Activated CD8-positive, alpha-beta T cell treated with anti-CD3 and anti-CD28 coated beads for 36 hours (primary cell): ENCODE measurements at regions of chr2 and their contacts with region 1.

Region 1: GRCh38 chr2:174492963-174493431 is 6.2 kb upstream of the GPR155 start:
- DNase-seq: peak; percentile 88
- ATAC-seq: peak; percentile 79
- H3K4me3 Mint-ChIP-seq: peak overlapping the region; percentile 77
- H3K27ac Mint-ChIP-seq: peak overlapping the region; percentile 98
- H3K4me1 Mint-ChIP-seq: peaks cover 73% of the 10 kb centered on the region
- H3K27me3 Mint-ChIP-seq: no peaks in the 10 kb centered on the region
- CTCF ChIP-seq: no peak

Region 2: DNA sequence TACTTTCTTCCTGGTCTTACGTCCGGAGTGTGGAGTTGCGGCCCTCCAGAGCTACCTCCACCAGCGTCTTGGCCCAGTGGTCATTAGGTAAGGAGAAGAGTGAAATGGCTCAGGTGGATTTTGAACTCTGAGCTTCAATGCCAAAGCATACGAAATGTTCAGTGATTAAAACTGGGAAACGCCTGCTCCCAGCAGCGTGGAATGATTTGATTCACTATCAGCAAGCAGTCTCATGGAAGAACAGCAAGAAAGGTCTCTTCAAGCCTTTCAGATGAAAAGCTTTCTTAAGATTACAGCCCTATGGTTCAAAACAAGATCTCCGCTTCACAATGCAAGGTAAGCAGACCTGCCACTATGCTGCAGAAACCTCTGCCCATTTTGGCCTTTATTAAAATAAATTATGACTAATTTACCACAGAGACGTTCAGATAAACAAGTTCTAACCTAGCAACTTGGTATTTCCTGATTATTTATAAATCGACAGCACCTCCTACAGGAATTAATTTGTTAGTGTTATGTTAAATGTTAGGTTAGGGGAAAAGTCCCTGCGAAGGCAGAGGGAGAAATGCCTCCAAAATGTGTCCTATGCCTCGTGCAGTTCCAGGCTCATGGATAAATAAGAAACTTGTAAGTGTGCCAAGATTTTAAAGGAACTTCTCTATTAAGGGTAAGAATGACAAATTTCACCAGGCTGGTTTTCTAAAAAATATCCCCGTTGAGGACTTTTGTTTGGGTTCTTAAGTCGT is 148.1 kb before region 1 on chr2:
- CTCF ChIA-PET with region 1: no interaction called
- POLR2A ChIA-PET with region 1: no interaction called
- intact Hi-C with region 1: no loop called
- DNase-seq: no peak
- ATAC-seq: no peak
- H3K4me3 Mint-ChIP-seq: no peak overlapping the region
- H3K27ac Mint-ChIP-seq: no peak overlapping the region
- H3K4me1 Mint-ChIP-seq: peaks cover 24% of the 10 kb centered on the region
- H3K27me3 Mint-ChIP-seq: peaks cover 43% of the 10 kb centered on the region
- CTCF ChIP-seq: peak; percentile 54

Region 3: DNA sequence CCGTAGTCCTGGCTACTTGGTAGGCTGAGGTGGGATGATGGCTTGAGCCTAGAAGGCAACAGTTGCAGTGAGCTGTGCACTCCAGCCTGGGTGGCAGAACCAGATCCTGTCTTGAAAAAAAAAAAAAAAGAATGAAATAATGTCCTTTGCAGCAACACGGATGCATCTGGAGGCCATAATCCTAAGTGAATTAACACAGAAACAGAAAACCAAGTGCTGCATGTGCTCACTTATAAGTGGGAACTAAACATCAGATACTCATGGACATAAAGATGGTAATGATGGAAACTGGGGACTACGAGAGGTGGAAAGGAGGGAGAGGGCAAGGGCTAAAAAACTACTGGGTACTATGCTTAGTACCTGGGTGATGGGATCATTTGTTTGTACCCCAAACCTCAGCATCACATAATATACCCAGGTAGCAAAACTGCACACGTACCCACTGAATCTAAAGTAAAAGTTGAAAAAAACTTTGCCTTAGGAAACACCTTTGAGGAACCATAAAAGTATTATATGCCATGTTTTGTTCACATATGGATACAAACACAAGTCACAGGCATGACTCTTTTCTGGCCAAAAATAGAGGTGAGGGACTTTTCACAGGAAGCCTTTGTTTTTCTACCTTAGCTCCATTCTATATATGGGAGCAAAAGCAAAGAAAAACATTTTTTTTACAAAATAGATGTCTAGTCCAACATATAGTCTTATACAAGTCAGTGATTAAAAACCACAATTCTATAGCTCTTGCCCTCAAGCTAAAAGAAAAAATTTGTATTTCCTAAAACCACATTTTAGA is 42.8 kb before region 1 on chr2:
- CTCF ChIA-PET with region 1: no interaction called
- POLR2A ChIA-PET with region 1: no interaction called
- intact Hi-C with region 1: no loop called
- DNase-seq: no peak
- ATAC-seq: no peak
- H3K4me3 Mint-ChIP-seq: no peak overlapping the region
- H3K27ac Mint-ChIP-seq: no peak overlapping the region
- H3K4me1 Mint-ChIP-seq: peaks cover 7% of the 10 kb centered on the region
- H3K27me3 Mint-ChIP-seq: no peaks in the 10 kb centered on the region
- CTCF ChIP-seq: no peak

Region 4: DNA sequence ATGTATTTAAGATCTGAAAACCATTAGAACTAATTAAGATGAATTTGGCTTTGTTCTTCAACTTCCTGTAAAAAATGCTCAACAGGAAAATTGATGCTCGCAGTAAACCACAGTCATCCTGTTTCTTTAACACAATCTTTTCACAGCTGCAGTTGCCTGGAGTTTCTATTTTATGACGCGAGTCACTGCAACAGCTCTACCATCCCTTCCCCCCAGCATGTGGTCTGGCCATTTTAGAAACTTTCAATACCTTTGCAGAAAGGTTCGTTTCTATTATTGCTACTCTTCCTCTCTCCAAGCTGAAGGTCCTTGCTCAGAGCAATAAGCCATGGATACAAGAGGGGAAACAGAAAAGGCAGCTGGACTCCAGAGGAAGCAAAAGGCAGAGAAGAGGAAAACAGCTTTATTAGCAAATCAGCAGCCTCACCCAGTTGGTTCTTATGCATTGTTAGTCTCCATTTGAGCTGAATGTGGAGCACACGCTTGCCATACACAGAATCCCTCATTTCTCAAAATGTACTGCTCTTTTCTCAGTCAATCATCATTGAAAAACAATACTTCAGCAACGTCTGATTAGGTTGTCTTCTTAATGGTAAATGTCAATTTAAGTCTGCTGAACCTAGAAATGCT is 100.7 kb after region 1 on chr2:
- CTCF ChIA-PET with region 1: interaction called, 5 read pairs
- POLR2A ChIA-PET with region 1: interaction called, 5 read pairs
- intact Hi-C with region 1: loop called (anchors 10 kb)
- DNase-seq: peak; percentile 88
- ATAC-seq: peak; percentile 71
- H3K4me3 Mint-ChIP-seq: peak overlapping the region; percentile 87
- H3K27ac Mint-ChIP-seq: peak overlapping the region; percentile 99
- H3K4me1 Mint-ChIP-seq: peaks cover 40% of the 10 kb centered on the region
- H3K27me3 Mint-ChIP-seq: no peaks in the 10 kb centered on the region
- CTCF ChIP-seq: no peak

Region 5: GRCh38 chr2:174654419-174654941 is 161.5 kb after region 1 on chr2:
- CTCF ChIA-PET with region 1: no interaction called
- POLR2A ChIA-PET with region 1: no interaction called
- intact Hi-C with region 1: no loop called
- DNase-seq: no peak
- ATAC-seq: no peak
- H3K4me3 Mint-ChIP-seq: no peak overlapping the region
- H3K27ac Mint-ChIP-seq: peak overlapping the region; percentile 2
- H3K4me1 Mint-ChIP-seq: peaks cover 43% of the 10 kb centered on the region
- H3K27me3 Mint-ChIP-seq: no peaks in the 10 kb centered on the region
- CTCF ChIP-seq: no peak